ENCODE measurements at regions of chr11 and their contacts with region 1.

Region 1: GRCh38 chr11:126607374-126607773 is 251.9 kb downstream of the ST3GAL4 start:
- DNase-seq: peak; percentile 42
- H3K4me3 ChIP-seq: no peak overlapping the region
- H3K27ac ChIP-seq: no peak overlapping the region
- H3K27me3 ChIP-seq: no peaks in the 10 kb centered on the region
- CTCF ChIP-seq: peak; percentile 96

Region 2: DNA sequence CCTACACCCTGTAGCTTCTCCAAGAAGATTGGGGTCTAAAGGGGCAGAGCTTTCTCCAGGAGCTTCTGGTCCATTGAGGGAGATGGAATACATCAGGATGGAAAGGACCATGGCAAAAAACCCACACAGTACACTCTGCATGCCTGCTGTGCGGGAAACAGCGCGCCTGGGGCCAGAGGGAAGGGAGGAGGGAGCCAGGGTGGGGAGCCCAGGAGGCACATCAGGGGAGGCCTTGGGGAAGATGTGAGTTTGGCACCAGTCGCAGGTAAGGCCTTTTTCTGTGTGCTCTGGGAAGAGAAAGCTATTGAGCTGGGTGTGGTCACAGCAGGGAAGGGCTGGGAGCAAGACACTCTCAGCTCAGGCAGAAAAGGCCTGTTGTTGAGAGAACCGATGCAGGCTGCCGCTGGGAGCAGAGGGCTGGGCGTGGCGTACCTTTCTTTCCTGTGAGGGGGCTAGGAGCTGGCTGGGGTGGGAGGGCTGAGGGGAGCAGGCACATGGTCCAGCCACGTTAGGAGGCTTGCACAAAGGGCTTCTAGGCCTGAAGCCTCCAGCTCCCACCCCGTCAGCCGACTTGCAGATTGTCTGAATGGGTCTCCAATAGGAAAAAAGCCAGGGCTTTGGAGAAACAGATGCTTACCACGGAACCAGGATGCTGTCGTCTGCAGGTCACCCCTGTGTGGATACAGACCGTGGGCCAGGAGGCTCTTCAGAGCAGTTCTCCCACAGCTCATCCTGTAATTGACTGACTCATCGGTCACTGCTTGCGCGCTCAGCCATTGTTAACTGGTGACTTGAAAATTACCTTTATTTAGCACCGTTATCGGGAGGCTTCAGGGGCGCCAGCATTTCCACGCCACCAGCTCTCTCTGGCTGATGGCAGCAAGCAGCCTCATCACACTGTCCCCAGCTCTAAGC is 14.6 kb before region 1 on chr11:
- CTCF ChIA-PET with region 1: interaction called, 16 read pairs
- POLR2A ChIA-PET with region 1: no interaction called
- DNase-seq: no peak
- H3K4me3 ChIP-seq: no peak overlapping the region
- H3K27ac ChIP-seq: no peak overlapping the region
- H3K27me3 ChIP-seq: no peaks in the 10 kb centered on the region
- CTCF ChIP-seq: no peak

Region 3: DNA sequence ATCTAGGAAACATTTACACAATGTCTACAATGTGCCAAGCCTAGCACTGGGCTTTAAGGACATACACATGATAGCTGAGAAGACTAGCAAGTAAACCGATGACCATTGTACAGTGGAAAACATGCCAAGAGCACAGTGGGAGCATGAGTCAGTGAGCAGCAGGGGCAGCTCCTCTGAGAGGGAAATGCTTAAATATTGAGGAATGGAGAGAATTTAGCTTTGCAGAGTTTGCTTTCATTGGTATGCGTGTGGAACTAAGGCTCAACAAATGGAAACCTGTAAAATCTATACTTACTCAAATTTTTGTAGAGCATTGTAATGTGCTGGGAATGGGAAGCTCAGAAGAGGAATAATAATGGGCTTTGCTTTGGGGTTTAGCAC is 30.4 kb after region 1 on chr11:
- CTCF ChIA-PET with region 1: interaction called, 11 read pairs
- POLR2A ChIA-PET with region 1: no interaction called
- DNase-seq: peak; percentile 81
- H3K4me3 ChIP-seq: no peak overlapping the region
- H3K27ac ChIP-seq: peak overlapping the region; percentile 87
- H3K27me3 ChIP-seq: no peaks in the 10 kb centered on the region
- CTCF ChIP-seq: no peak

Region 4: GRCh38 chr11:126743633-126744032 is 136.3 kb after region 1 on chr11:
- CTCF ChIA-PET with region 1: no interaction called
- POLR2A ChIA-PET with region 1: no interaction called
- DNase-seq: no peak
- H3K4me3 ChIP-seq: no peak overlapping the region
- H3K27ac ChIP-seq: no peak overlapping the region
- H3K27me3 ChIP-seq: no peaks in the 10 kb centered on the region
- CTCF ChIP-seq: no peak

Region 5: GRCh38 chr11:126969865-126970479 is 362.6 kb after region 1 on chr11:
- CTCF ChIA-PET with region 1: interaction called, 12 read pairs
- POLR2A ChIA-PET with region 1: no interaction called
- DNase-seq: no peak
- H3K4me3 ChIP-seq: no peak overlapping the region
- H3K27ac ChIP-seq: peak overlapping the region; percentile 34
- H3K27me3 ChIP-seq: no peaks in the 10 kb centered on the region
- CTCF ChIP-seq: peak; percentile 92

Region 6: GRCh38 chr11:127074151-127074761 is 466.9 kb after region 1 on chr11:
- CTCF ChIA-PET with region 1: interaction called, 15 read pairs
- POLR2A ChIA-PET with region 1: no interaction called
- DNase-seq: peak; percentile 26
- H3K4me3 ChIP-seq: no peak overlapping the region
- H3K27ac ChIP-seq: no peak overlapping the region
- H3K27me3 ChIP-seq: peaks cover 13% of the 10 kb centered on the region
- CTCF ChIP-seq: peak; percentile 48